K562 (cell line): ENCODE measurements at regions of chr14 and their contacts with region 1.

Region 1: DNA sequence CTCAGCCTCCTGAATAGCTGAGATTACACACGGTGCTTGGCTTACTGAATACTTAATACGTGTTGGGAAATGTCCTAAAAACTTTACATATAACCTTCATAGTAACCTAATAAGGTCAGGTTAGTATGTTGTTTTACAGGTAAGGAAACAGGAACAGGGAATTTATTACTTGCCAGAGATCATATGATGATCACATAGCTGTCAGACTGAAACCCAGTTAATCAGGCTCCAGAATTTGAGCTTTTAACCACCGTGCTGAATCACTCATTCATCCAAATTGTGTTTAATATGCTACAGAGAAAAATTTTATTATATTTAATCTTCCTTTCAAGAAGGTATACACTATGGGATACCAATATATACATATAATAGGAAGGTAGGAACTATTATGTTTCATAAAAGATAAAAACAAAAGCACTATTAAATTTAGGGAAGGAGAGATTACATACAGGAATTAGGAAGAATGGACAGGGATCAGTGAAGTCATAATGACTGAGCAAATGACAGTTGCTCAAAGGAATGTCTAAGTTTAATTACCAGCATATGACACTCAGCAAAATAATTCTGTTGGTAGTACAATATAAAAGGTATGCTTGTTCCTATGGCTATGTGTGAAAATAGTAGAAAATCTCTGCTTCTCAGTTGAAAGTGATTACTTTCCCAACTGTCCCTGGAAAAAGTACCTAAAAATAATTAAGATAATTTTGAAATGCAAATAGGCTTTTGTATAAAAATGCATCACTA is 59.3 kb downstream of the HEATR5A start:
- DNase-seq: no peak
- ATAC-seq: no peak
- H3K4me3 ChIP-seq: no peak overlapping the region
- H3K27ac ChIP-seq: no peak overlapping the region
- H3K4me1 ChIP-seq: no peaks in the 10 kb centered on the region
- H3K27me3 ChIP-seq: no peaks in the 10 kb centered on the region
- CTCF ChIP-seq: no peak
- EP300 ChIP-seq: no peak
- POLR2A ChIP-seq: no peak
- RAD21 ChIP-seq: no peak

Region 2: GRCh38 chr14:30656190-30656632 is 704.9 kb before region 1 on chr14:
- CTCF ChIA-PET with region 1: no interaction called
- POLR2A ChIA-PET with region 1: no interaction called
- in situ Hi-C with region 1: loop called (anchors 25 kb)
- intact Hi-C with region 1: no loop called
- DNase-seq: peak in 3 of 4 experiments; percentile 13 to 37 (median 14)
- ATAC-seq: peak; percentile 70
- H3K4me3 ChIP-seq: no peak overlapping the region
- H3K27ac ChIP-seq: no peak overlapping the region
- H3K4me1 ChIP-seq: peaks cover 0 to 3% of the 10 kb centered on the region in 2 experiments; a peak in 1 of 5 replicates
- H3K27me3 ChIP-seq: no peaks in the 10 kb centered on the region
- CTCF ChIP-seq: peak; percentile 45 to 61 (median 57)
- EP300 ChIP-seq: no peak
- POLR2A ChIP-seq: no peak
- RAD21 ChIP-seq: peak in 1 of 2 experiments; percentile 26; a peak in 2 of 4 replicates

Region 3: GRCh38 chr14:31084385-31084784 is 276.7 kb before region 1 on chr14:
- CTCF ChIA-PET with region 1: no interaction called
- POLR2A ChIA-PET with region 1: no interaction called
- in situ Hi-C with region 1: no loop called
- intact Hi-C with region 1: loop called (anchors 10 kb)
- DNase-seq: peak; percentile 19 to 41 (median 37)
- ATAC-seq: peak; percentile 87
- H3K4me3 ChIP-seq: no peak overlapping the region
- H3K27ac ChIP-seq: no peak overlapping the region
- H3K4me1 ChIP-seq: peaks cover 0 to 6% of the 10 kb centered on the region in 2 experiments; a peak in 3 of 5 replicates
- H3K27me3 ChIP-seq: no peaks in the 10 kb centered on the region
- CTCF ChIP-seq: peak; percentile 33 to 43 (median 40)
- EP300 ChIP-seq: no peak
- POLR2A ChIP-seq: no peak
- RAD21 ChIP-seq: peak in 1 of 2 experiments; percentile 46; a peak in 2 of 4 replicates

Region 4: DNA sequence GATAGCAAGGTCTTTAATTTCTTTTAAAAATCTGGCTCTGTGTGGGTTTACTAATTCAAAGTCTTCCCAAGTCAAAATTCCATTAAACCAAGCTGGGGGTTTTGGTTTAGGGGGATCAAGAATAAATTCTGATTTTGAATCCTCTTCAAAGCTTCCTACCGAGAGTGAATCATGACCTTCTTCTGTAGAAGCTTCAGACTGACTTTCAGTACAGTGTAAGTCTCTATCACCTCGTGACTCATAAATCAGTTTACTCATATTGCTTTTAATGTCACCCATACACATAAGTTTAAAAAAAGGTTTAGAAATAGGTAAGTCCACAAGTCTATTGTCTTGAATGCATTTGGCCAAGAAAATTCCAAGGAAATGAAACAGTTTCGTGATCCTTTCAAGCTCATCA is 254.3 kb before region 1 on chr14:
- CTCF ChIA-PET with region 1: no interaction called
- POLR2A ChIA-PET with region 1: no interaction called
- in situ Hi-C with region 1: loop called (anchors 10 kb)
- intact Hi-C with region 1: no loop called
- DNase-seq: no peak
- ATAC-seq: no peak
- H3K4me3 ChIP-seq: no peak overlapping the region
- H3K27ac ChIP-seq: no peak overlapping the region
- H3K4me1 ChIP-seq: no peaks in the 10 kb centered on the region
- H3K27me3 ChIP-seq: no peaks in the 10 kb centered on the region
- CTCF ChIP-seq: no peak
- EP300 ChIP-seq: no peak
- POLR2A ChIP-seq: no peak
- RAD21 ChIP-seq: no peak

Region 5: DNA sequence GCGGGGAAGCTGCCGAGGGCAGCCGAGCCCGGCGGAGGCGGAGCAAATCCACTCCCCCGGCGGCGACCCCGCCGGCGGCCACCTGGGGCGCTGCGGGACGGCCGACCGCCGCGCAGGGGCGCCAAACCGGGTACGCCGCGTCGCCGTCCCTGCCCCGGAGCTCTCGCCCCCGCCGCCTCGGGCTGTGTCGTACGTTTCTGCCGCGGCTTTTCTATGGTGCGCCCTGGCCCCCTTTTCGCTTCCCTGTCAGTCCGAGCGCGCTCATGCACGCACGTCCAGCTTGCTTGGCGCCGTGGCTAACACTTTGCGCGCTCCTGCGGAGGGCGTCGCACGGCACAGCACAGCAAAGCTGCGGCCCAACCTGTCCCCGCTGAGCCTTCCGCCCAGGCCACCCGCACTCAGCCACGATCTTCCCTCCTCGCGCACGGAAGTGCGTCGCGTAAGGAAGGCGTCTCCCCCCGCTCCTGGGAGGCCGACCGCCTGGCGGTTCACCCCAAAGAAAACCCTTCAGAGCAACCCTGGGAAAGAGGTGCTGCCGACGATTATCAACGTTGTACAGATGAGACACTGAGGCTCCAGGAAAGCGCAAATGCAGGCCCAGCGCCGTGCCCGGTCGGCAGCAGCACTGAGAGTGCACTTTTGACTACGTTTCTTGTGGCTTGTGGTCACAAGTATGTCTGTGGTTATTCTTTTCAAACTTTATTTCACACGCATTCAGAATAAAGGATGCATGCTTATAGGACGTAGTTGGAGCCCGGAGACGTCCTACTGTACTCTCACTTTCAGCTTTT is 153.1 kb before region 1 on chr14 and contains the start of gene HECTD1:
- CTCF ChIA-PET with region 1: no interaction called
- POLR2A ChIA-PET with region 1: no interaction called
- in situ Hi-C with region 1: no loop called
- intact Hi-C with region 1: loop called (anchors 5 kb)
- DNase-seq: peak; percentile 85 to 90 (median 88)
- ATAC-seq: peak; percentile 86
- H3K4me3 ChIP-seq: peak within 1 kb of the TSS; percentile 63
- H3K27ac ChIP-seq: peak within 1 kb of the TSS; percentile 99
- H3K4me1 ChIP-seq: peaks cover 6 to 9% of the 10 kb centered on the region in 2 experiments; a peak in 4 of 5 replicates
- H3K27me3 ChIP-seq: no peaks in the 10 kb centered on the region
- CTCF ChIP-seq: peak; percentile 48 to 97 (median 84); a peak in 5 of 6 replicates
- EP300 ChIP-seq: peak; percentile 37; the same call in 1 of the 2 replicates
- POLR2A ChIP-seq: peak; percentile 92
- RAD21 ChIP-seq: peak; percentile 61 to 64
- polyA plus RNA-seq, gene HECTD1: 27.9 to 37.2 TPM

Region 6: GRCh38 chr14:31388687-31389413 is 27.8 kb after region 1 on chr14:
- CTCF ChIA-PET with region 1: no interaction called
- POLR2A ChIA-PET with region 1: no interaction called
- in situ Hi-C with region 1: no loop called
- intact Hi-C with region 1: no loop called
- DNase-seq: no peak
- ATAC-seq: no peak
- H3K4me3 ChIP-seq: no peak overlapping the region
- H3K27ac ChIP-seq: no peak overlapping the region
- H3K4me1 ChIP-seq: no peaks in the 10 kb centered on the region
- H3K27me3 ChIP-seq: no peaks in the 10 kb centered on the region
- CTCF ChIP-seq: no peak
- EP300 ChIP-seq: no peak
- POLR2A ChIP-seq: no peak
- RAD21 ChIP-seq: no peak

Region 7: GRCh38 chr14:31449971-31450610 is 89.0 kb after region 1 on chr14:
- CTCF ChIA-PET with region 1: no interaction called
- POLR2A ChIA-PET with region 1: no interaction called
- in situ Hi-C with region 1: no loop called
- intact Hi-C with region 1: loop called (anchors 5 kb)
- DNase-seq: peak; percentile 12 to 28 (median 15)
- ATAC-seq: peak; percentile 79
- H3K4me3 ChIP-seq: no peak overlapping the region
- H3K27ac ChIP-seq: no peak overlapping the region
- H3K4me1 ChIP-seq: peaks cover 0 to 11% of the 10 kb centered on the region in 2 experiments; a peak in 2 of 5 replicates
- H3K27me3 ChIP-seq: no peaks in the 10 kb centered on the region
- CTCF ChIP-seq: peak in 2 of 3 experiments; percentile 32 to 63; a peak in 3 of 6 replicates
- EP300 ChIP-seq: no peak
- POLR2A ChIP-seq: no peak
- RAD21 ChIP-seq: peak; percentile 29 to 58; a peak in 3 of 4 replicates